Adrenal gland (tissue), 19 donors: ENCODE measurements at regions of chr15 and their contacts with region 1.

Region 1: DNA sequence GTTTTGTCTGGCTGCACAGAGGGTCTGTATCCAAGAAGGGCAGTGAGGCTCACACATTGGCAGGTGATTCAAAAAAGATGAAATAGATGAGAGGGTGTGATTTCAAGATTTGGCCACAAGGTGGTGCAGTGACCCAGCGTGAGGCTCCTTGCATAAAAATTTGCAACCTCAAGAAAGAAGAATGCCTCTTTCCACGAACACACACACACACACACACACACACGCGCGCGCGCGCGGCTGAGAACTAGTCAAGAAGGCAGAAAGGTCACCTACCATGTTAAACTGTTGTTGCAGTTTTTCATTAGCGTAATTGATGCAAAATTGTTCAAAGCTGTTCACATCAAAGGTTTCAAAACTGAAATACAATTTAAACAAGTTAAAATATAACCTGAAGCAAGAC is 39.2 kb downstream of the MYO5C start:
- DNase-seq: peak; percentile 43 to 87 (median 70)
- H3K4me3 ChIP-seq: no peak overlapping the region
- H3K27ac ChIP-seq: no peak overlapping the region
- H3K4me1 ChIP-seq: no peaks in the 10 kb centered on the region
- H3K27me3 ChIP-seq: no peaks in the 10 kb centered on the region
- CTCF ChIP-seq: peak; percentile 67 to 88 (median 76)
- POLR2A ChIP-seq: no peak

Region 2: DNA sequence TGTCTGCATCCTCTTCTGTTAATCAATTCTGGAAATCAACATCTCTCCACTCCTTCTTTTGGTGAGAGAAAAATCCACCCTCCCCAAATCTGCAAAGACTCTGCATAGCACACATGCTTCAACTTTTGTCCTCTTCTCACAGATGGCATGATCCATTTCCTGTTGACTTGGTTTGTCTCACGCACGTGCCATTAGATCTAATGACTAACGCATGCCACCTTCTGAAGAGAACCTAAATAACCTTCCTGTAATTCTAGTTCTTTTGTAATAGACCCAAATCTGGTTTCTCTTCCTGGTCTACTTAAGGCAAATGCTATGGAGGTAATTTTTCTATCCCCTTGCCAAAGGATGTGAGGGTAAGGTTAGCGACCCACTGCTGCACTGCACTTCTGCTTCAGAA is 473.8 kb after region 1 on chr15:
- intact Hi-C with region 1: loop called (anchors 5 to 10 kb)
- DNase-seq: no peak
- H3K4me3 ChIP-seq: no peak overlapping the region
- H3K27ac ChIP-seq: no peak overlapping the region
- H3K4me1 ChIP-seq: peaks cover 13 to 37% of the 10 kb centered on the region in 2 donors
- H3K27me3 ChIP-seq: no peaks in the 10 kb centered on the region
- CTCF ChIP-seq: no peak
- POLR2A ChIP-seq: no peak

Region 3: DNA sequence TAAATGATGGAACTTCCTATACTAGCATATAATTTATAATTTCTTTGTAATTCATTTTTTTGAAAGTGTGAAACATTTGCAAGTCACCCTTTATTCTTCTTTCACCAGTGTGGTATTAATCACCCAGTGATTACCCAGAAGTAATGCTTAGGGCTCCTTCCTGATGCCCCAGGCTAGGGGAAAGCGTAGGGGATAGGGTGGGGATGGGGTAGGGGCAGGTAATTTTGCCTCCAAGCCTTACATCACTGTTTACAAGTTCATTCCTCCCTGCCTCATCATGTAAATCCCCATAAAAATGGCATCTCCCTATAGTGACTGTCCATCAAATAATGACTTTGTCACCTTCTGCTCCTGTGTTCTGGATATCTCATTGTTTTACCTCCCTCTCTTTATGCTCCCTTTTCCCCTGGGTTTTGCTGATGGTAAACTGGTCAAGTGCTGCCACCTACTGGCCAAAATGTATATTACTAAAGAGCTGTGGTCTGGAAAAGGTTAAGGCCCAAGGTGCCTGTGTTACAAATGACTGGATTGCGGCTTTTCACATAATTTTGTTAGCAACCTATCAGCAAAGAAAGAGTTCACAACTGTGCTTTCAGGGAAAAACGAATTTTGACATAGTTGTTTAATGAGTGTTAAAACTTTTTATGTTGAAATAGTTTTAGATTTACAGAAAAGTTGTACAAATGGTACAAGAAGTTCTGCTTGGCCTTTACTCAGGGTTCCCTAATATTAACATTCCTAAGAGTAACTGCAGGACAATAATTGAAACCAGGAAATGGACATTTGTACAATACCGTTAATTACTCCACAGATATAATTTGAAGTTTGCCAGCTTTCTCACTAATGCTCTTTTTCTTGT is 479.1 kb after region 1 on chr15:
- intact Hi-C with region 1: loop called (anchors 5 to 10 kb)
- DNase-seq: peak; percentile 51 to 88 (median 78)
- H3K4me3 ChIP-seq: no peak overlapping the region
- H3K27ac ChIP-seq: no peak overlapping the region
- H3K4me1 ChIP-seq: peaks cover 18 to 36% of the 10 kb centered on the region in 2 donors
- H3K27me3 ChIP-seq: no peaks in the 10 kb centered on the region
- CTCF ChIP-seq: peak; percentile 81 to 92 (median 88)
- POLR2A ChIP-seq: no peak